Gastrocnemius medialis (tissue), 4 donors: ENCODE measurements at regions of chr2 and their contacts with region 1.

Region 1: GRCh38 chr2:240434728-240435456 is 571 bp upstream of the GPC1 start:
- DNase-seq: peak; percentile 91
- ATAC-seq: peak; percentile 52 to 64
- H3K4me3 ChIP-seq: peak overlapping the region; percentile 46 to 77 (median 59)
- H3K27ac ChIP-seq: peak overlapping the region; percentile 84 to 97 (median 93)
- H3K4me1 ChIP-seq: peaks cover 35 to 39% of the 10 kb centered on the region in 2 donors
- H3K27me3 ChIP-seq: no peaks in the 10 kb centered on the region
- CTCF ChIP-seq: no peak
- POLR2A ChIP-seq: no peak

Region 2: DNA sequence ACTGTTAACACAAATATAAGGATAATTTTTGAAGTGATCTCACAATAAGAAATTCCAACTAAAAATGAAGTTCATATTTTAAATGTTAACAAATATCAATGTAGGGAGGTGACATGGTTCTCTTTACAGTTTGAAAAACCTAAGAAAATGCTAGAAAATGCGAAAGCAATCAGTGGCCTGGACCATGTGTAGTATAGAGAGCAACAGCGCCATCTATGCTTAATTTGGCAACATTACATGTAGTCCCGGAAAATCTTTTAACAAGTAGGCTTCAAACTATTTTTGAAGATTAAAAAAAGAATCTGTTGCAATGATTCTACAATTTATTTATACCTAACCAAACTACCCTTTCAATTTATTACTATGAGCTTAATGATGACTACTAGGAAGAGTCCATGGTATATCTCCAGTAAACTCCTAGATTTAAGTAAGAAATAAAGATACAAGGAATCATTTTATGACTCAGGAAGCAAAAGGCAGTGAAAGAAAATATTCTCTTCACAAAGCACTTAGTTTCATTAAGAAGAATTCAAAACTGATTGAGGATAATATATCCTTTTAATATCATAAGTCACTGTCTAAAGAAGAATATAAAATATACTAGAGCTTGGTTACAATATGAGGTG is 443.1 kb before region 1 on chr2:
- in situ Hi-C with region 1: no loop called
- intact Hi-C with region 1: no loop called
- DNase-seq: no peak
- ATAC-seq: peak; percentile 39 to 60
- H3K4me3 ChIP-seq: no peak overlapping the region
- H3K27ac ChIP-seq: no peak overlapping the region
- H3K4me1 ChIP-seq: no peaks in the 10 kb centered on the region
- H3K27me3 ChIP-seq: no peaks in the 10 kb centered on the region
- CTCF ChIP-seq: peak; percentile 56 to 86 (median 69)
- POLR2A ChIP-seq: no peak

Region 3: DNA sequence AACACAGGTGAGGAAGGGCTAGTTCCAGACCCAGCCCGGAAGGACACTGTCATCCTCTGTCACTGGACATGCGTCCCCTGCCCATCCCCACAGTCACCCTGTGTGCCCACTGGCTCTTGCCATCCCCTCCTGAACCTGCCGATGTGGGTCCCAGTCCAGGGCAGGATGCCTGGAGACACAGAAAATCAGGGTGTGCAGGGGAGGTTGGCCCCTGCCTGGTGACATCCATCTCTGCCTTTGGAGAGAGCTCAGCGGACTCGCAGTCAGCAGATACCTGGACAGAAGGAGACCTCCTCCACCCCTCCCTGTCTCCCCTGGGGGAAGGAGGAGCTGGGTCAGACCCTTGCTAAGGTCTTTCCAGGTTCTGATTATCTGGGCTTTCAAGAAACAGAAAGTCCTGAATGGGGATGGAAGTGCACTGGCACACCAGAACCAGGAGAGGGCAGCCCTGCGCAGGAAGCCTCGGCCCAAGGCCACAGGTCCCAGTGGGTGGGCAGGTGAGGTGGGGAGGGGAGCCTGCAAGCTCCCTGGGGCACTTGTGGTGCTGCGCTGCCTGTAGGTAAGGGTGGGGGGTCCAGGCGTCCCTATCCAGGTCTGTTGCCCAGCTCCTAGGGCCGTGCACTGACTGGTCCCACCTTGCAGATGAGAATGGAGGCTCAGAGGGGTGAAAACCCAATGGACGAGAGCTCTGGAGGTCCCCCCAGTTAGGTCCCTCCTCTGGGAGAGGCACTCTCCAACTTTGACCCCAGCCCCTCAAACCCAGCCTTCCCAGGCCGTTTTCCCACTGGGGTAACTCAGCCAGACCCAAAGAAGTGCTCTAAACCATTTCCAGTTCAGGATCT is 284.7 kb before region 1 on chr2:
- in situ Hi-C with region 1: no loop called
- intact Hi-C with region 1: loop called (anchors 5 kb)
- DNase-seq: no peak
- ATAC-seq: peak in 1 of 2 donors; percentile 55
- H3K4me3 ChIP-seq: no peak overlapping the region
- H3K27ac ChIP-seq: no peak overlapping the region
- H3K4me1 ChIP-seq: no peaks in the 10 kb centered on the region
- H3K27me3 ChIP-seq: no peaks in the 10 kb centered on the region
- CTCF ChIP-seq: peak; percentile 33 to 75 (median 56)
- POLR2A ChIP-seq: no peak

Region 4: GRCh38 chr2:240217431-240218239 is 217.3 kb before region 1 on chr2:
- in situ Hi-C with region 1: no loop called
- intact Hi-C with region 1: no loop called
- DNase-seq: no peak
- ATAC-seq: no peak
- H3K4me3 ChIP-seq: no peak overlapping the region
- H3K27ac ChIP-seq: no peak overlapping the region
- H3K4me1 ChIP-seq: peaks cover 0 to under 1% of the 10 kb centered on the region in 2 donors
- H3K27me3 ChIP-seq: no peaks in the 10 kb centered on the region
- CTCF ChIP-seq: no peak
- POLR2A ChIP-seq: no peak

Region 5: DNA sequence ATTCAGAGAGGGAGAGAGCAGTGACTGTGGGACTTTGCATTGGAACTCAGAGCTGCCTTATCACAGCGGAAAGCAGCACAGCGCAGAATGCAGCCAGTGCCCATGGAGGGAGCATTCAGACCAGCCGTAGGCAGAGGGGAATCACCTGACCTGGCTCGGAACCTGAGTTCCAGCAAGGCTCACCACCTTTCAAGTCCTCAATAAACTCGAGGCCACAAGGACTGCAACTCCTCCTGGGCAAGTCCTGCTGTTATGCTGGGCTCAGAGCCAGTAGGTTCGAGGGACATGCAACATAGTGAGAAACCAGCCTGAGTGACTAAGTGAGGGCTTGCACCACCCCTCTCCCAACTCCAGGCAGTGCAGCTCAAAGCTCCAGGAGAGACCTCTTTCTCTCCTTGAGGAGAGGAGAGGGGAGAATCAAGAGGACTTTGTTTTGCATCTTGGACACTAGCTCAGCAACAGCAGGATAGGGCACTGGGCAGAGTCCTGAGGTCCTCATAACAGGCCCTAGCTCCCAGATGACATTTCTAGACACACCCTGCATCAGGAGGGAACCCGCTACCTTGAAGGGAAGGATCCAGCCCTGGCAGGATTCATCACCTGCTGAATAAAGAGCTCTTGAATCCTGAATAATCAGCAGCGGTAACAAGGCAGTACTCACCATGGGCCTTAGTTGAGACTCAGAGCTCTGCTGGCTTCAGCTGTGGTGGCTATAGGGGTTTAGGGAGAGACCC is 157.7 kb before region 1 on chr2:
- in situ Hi-C with region 1: no loop called
- intact Hi-C with region 1: no loop called
- DNase-seq: no peak
- ATAC-seq: peak in 1 of 2 donors; percentile 29
- H3K4me3 ChIP-seq: no peak overlapping the region
- H3K27ac ChIP-seq: no peak overlapping the region
- H3K4me1 ChIP-seq: peaks cover 11 to 15% of the 10 kb centered on the region in 2 donors
- H3K27me3 ChIP-seq: no peaks in the 10 kb centered on the region
- CTCF ChIP-seq: no peak
- POLR2A ChIP-seq: no peak

Region 6: DNA sequence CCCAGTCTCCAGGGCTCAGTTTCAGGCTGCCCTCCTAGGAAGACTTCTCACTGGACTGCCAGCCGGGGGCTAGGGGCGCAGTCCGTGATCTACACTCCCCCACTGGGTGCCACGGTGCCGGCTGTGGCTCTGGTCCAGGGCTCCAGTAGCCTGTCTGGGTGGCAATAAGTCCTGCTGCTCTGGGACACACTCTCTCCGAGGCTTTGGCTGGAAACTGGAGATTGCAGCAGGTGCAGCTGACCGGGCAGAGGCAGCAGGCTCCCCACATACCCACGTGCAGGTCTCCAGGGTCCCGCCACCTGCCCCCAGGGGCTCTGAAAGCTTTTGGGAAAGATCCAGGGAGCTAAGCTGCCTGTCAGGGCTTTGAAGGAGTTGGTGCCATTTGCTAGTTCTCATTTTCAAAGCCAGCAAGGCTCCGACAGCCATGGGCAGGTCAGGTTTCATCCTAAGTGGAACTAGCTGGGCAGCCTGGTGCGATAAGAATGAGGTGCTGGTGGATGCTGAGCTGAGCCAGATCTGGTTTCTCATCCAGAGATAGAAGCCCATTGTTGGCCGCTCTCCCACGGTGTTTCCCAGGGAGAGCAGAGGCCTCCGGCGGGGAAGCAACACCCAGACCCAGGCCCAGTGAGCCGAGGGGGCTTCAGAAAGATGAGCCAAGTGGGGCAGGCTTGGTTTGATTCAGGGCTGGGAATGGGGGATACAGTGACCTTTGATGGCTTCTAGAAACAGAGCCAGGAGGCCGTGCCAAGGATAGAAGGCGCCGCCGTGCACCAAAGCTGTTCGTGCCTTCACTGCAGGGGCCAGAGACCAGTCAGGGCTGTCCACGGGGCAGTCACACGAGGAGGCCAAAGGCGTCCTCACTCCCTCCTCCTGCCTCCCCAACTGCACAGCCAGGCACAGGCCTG is 141.1 kb before region 1 on chr2:
- in situ Hi-C with region 1: no loop called
- intact Hi-C with region 1: loop called (anchors 5 kb)
- DNase-seq: peak; percentile 58 to 86
- ATAC-seq: peak; percentile 83 to 88
- H3K4me3 ChIP-seq: peak overlapping the region in 1 of 4 donors; percentile 10
- H3K27ac ChIP-seq: peak overlapping the region; percentile 76 to 88 (median 87)
- H3K4me1 ChIP-seq: peaks cover 18 to 25% of the 10 kb centered on the region in 2 donors
- H3K27me3 ChIP-seq: no peaks in the 10 kb centered on the region
- CTCF ChIP-seq: no peak
- POLR2A ChIP-seq: no peak

Region 7: GRCh38 chr2:240369801-240370585 is 64.9 kb before region 1 on chr2:
- in situ Hi-C with region 1: no loop called
- intact Hi-C with region 1: loop called (anchors 1 kb)
- DNase-seq: peak; percentile 90 to 97
- ATAC-seq: peak; percentile 72 to 76
- H3K4me3 ChIP-seq: peak overlapping the region; percentile 0 to 39 (median 28)
- H3K27ac ChIP-seq: peak overlapping the region; percentile 96 to 99 (median 98)
- H3K4me1 ChIP-seq: peaks cover 52 to 74% of the 10 kb centered on the region in 2 donors
- H3K27me3 ChIP-seq: no peaks in the 10 kb centered on the region
- CTCF ChIP-seq: no peak
- POLR2A ChIP-seq: peak; percentile 51 to 55